ENCODE measurements at regions of chr10 and their contacts with region 1.

Region 1: GRCh38 chr10:10677479-10677878 is 340.2 kb upstream of the CELF2 start:
- DNase-seq: peak; percentile 49
- H3K4me3 ChIP-seq: no peak overlapping the region
- H3K27ac ChIP-seq: no peak overlapping the region
- H3K27me3 ChIP-seq: no peaks in the 10 kb centered on the region
- CTCF ChIP-seq: peak; percentile 61

Region 2: DNA sequence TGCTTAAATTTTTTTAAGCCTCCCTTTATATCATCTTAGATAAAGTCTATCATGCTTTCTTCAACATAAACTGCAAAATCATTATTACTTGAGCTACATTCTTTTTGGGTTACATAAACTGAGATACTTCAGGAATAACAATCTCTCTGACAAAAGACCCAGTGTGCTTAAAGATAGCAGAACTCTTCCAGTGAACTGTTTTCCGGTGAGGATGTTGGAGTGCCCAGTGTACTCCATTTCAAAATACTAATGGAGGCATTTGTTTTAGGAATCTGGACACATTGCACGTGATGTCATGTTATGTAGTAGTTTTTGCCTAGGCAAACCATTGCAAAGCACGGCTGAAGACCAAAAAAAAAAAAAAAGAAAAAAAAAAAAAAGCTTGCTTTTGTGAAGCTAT is 48.0 kb before region 1 on chr10:
- CTCF ChIA-PET with region 1: no interaction called
- POLR2A ChIA-PET with region 1: no interaction called
- DNase-seq: no peak
- H3K4me3 ChIP-seq: no peak overlapping the region
- H3K27ac ChIP-seq: no peak overlapping the region
- H3K27me3 ChIP-seq: no peaks in the 10 kb centered on the region
- CTCF ChIP-seq: no peak

Region 3: GRCh38 chr10:11036407-11037011 is 359.0 kb after region 1 on chr10:
- CTCF ChIA-PET with region 1: interaction called, 11 read pairs
- POLR2A ChIA-PET with region 1: no interaction called
- DNase-seq: peak; percentile 16
- H3K4me3 ChIP-seq: no peak overlapping the region
- H3K27ac ChIP-seq: no peak overlapping the region
- H3K27me3 ChIP-seq: no peaks in the 10 kb centered on the region
- CTCF ChIP-seq: peak; percentile 67

Measured in AG04450 (cell line).